Activated B cell treated with CpG ODN at 0.5 μM for 24 hours (primary cell): ENCODE measurements at regions of chrX and their contacts with region 1.

Region 1: GRCh38 chrX:107627838-107628661 is at the start of gene PRPS1:
- DNase-seq: peak; percentile 68
- ATAC-seq: peak; percentile 99
- H3K4me3 Mint-ChIP-seq: peak within 1 kb of the TSS; percentile 93
- H3K27ac Mint-ChIP-seq: peak within 1 kb of the TSS; percentile 93
- H3K4me1 Mint-ChIP-seq: peaks cover 31% of the 10 kb centered on the region
- H3K27me3 Mint-ChIP-seq: no peaks in the 10 kb centered on the region
- CTCF ChIP-seq: no peak
- total RNA-seq, gene PRPS1: 49.7 and 53.8 TPM in 2 replicates

Region 2: DNA sequence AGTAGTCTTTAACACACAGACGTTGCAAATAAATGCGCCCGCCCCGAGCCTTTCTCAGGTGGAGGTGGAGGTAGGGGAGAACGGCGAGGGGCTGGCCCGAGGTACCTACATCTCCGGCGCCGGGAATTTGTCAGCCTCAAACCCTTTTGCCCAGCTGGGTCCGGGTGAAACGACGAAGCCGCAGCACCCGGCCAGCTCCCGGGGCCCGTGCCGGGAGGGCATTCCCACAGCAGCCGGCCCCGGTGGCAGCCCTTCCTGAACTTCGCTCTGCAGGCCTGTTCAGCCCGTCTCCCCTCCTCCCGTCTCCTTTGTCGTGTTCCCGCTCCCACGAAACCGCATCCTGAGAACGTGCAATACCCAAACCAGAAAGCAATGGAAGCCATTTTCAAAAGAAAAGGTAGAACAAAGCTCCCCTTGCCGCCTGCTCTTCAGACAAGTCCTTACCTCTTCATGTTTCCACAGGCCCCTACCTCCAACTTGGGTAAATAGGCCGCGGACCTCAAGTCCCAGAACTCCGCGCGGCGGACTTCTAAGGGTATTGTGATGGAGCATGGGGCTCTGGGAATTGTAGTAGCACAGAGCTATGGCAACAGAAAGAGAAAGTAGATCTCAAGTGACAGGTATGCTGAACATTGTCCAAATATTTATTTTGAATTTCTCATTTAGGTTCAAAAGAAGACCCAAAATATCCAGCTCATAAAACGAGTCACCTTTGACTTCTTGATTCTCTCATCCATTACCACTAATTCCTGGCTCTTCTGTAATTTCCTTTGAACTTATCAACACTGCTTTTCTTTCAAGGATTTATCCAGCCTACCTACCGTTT is 509.5 kb before region 1 on chrX and contains the start of gene RBM41:
- CTCF ChIA-PET with region 1: no interaction called
- POLR2A ChIA-PET with region 1: no interaction called
- intact Hi-C with region 1: loop called (anchors 1 kb)
- DNase-seq: peak; percentile 39
- ATAC-seq: peak; percentile 99
- H3K4me3 Mint-ChIP-seq: peak within 1 kb of the TSS; percentile 100
- H3K27ac Mint-ChIP-seq: peak within 1 kb of the TSS; percentile 96
- H3K4me1 Mint-ChIP-seq: peaks cover 26% of the 10 kb centered on the region
- H3K27me3 Mint-ChIP-seq: no peaks in the 10 kb centered on the region
- CTCF ChIP-seq: no peak
- total RNA-seq, gene RBM41: 16.5 and 18.5 TPM in 2 replicates

Region 3: GRCh38 chrX:107450823-107451509 is 177.1 kb before region 1 on chrX:
- CTCF ChIA-PET with region 1: no interaction called
- POLR2A ChIA-PET with region 1: no interaction called
- intact Hi-C with region 1: loop called (anchors 1 kb)
- DNase-seq: no peak
- ATAC-seq: peak; percentile 38
- H3K4me3 Mint-ChIP-seq: peak overlapping the region; percentile 77
- H3K27ac Mint-ChIP-seq: no peak overlapping the region
- H3K4me1 Mint-ChIP-seq: peaks cover 23% of the 10 kb centered on the region
- H3K27me3 Mint-ChIP-seq: no peaks in the 10 kb centered on the region
- CTCF ChIP-seq: no peak

Region 4: GRCh38 chrX:107672955-107673378 is 44.9 kb after region 1 on chrX:
- CTCF ChIA-PET with region 1: no interaction called
- POLR2A ChIA-PET with region 1: interaction called, 7 read pairs
- intact Hi-C with region 1: loop called (anchors 1 kb)
- DNase-seq: peak; percentile 62
- ATAC-seq: peak; percentile 41
- H3K4me3 Mint-ChIP-seq: peak overlapping the region; percentile 50
- H3K27ac Mint-ChIP-seq: peak overlapping the region; percentile 96
- H3K4me1 Mint-ChIP-seq: peaks cover 50% of the 10 kb centered on the region
- H3K27me3 Mint-ChIP-seq: no peaks in the 10 kb centered on the region
- CTCF ChIP-seq: no peak

Region 5: GRCh38 chrX:107716816-107717700 is 89.0 kb after region 1 on chrX:
- CTCF ChIA-PET with region 1: interaction called, 3 read pairs
- POLR2A ChIA-PET with region 1: interaction called, 17 read pairs
- intact Hi-C with region 1: no loop called
- DNase-seq: peak; percentile 73
- ATAC-seq: peak; percentile 56
- H3K4me3 Mint-ChIP-seq: peak overlapping the region; percentile 94
- H3K27ac Mint-ChIP-seq: peak overlapping the region; percentile 99
- H3K4me1 Mint-ChIP-seq: peaks cover 81% of the 10 kb centered on the region
- H3K27me3 Mint-ChIP-seq: no peaks in the 10 kb centered on the region
- CTCF ChIP-seq: no peak

Region 6: DNA sequence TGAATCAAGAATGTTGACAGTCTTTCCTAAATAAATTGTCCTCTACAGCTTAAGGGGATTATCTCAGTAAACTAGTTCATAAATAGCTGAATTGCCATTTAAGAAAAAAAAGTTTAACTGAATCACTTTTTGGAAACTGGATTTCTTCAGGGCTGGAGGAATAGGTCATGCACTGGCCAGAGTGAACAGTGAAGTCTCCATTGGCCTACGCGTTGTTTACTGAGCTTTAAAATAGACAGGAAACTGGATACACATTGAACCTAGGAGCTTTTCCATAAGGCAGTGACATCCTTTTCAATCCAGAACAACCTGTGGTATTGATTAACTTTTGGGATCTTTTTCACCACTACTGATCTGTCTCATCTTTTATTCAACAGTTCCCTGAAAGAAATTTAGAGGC is 752.2 kb after region 1 on chrX:
- CTCF ChIA-PET with region 1: no interaction called
- POLR2A ChIA-PET with region 1: no interaction called
- intact Hi-C with region 1: no loop called
- DNase-seq: no peak
- ATAC-seq: no peak
- H3K4me3 Mint-ChIP-seq: no peak overlapping the region
- H3K27ac Mint-ChIP-seq: no peak overlapping the region
- H3K4me1 Mint-ChIP-seq: no peaks in the 10 kb centered on the region
- H3K27me3 Mint-ChIP-seq: no peaks in the 10 kb centered on the region
- CTCF ChIP-seq: no peak